Activated naive CD4-positive, alpha-beta T cell treated with anti-CD3 and anti-CD28 coated beads, Interleukin-2, amount 10 ng/mL, durations not matched to agents 7 days and 5 days (primary cell): ENCODE measurements at regions of chr17 and their contacts with region 1.

Region 1: GRCh38 chr17:40355123-40355803 is 9.3 kb downstream of the GJD3 start:
- DNase-seq: peak; percentile 83
- H3K4me3 Mint-ChIP-seq: no peak overlapping the region
- H3K27ac Mint-ChIP-seq: no peak overlapping the region
- H3K4me1 Mint-ChIP-seq: peaks cover 32% of the 10 kb centered on the region
- H3K27me3 Mint-ChIP-seq: peaks cover 5% of the 10 kb centered on the region

Region 2: DNA sequence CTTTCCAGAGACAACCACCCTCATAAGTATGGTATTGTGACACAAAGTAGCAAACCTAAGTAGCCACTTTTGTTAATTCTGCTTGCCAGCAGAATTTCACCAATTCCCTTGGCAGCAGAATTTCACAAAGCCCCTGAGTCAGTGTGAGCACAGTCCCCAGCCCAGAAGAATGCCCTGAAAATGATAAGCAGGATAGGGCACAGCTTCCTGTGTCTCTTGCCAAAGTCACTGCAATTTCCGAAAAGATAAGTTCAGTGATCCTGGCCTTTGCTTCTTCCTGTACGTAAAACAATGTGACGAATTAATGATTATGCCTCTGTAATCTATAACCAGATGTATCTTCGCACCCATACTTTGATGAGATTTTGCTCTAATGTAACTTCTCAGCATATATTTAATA is 152.1 kb before region 1 on chr17:
- CTCF ChIA-PET with region 1: interaction called, 11 read pairs
- DNase-seq: no peak
- H3K4me3 Mint-ChIP-seq: no peak overlapping the region
- H3K27ac Mint-ChIP-seq: no peak overlapping the region
- H3K4me1 Mint-ChIP-seq: peaks cover 6% of the 10 kb centered on the region
- H3K27me3 Mint-ChIP-seq: peaks cover 48% of the 10 kb centered on the region

Region 3: GRCh38 chr17:40293363-40293762 is 61.9 kb before region 1 on chr17:
- CTCF ChIA-PET with region 1: interaction called, 370 read pairs
- DNase-seq: no peak
- H3K4me3 Mint-ChIP-seq: no peak overlapping the region
- H3K27ac Mint-ChIP-seq: peak overlapping the region; percentile 42
- H3K4me1 Mint-ChIP-seq: peaks cover 42% of the 10 kb centered on the region
- H3K27me3 Mint-ChIP-seq: no peaks in the 10 kb centered on the region

Region 4: DNA sequence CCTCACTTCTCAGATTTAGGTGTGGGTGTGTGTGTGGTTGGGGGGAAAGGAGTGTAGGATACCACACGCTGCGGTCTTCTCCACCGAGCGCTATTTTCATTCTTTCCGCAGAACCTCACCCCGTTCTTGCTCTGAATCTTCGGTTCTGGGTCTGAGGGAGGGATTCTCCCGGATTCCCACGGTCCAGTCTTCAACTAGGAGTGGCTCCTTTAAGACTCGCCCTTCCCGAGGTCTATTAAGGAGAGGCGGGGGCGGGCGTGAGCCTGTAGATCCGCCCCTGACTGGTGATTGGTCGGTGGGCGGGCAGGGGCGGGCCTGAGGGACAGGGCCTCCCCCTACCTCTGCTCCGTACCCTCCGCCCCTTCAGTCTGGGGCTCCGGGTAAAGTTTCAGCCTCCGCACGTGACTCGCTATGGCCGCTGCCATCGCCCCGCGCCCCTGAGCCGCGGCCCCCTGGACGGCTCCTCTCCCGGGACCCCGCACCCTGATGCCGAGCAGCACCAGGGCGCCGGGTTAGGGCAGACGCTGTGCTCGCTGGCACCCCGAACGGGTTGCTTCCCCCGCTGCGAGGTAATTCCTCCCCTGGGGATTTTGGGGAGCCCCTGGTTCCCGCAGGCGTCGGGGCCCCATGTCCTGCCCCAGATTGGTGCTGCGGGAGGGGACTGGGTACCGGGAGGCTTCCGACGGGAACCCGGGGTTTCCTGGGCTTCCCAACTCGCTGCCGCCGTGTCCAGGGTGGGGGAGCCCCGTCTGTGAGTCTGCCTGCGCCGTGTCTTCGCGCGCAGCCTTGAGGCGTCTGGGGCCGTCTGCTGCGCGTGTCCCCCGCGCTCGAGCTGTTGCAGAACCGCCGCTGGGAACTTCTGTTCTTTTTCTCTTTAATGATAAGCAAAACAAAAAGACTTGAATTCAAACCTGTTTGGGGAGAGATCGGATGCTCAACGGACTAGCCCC is 37.1 kb before region 1 on chr17:
- CTCF ChIA-PET with region 1: interaction called, 370 read pairs
- DNase-seq: peak; percentile 93
- H3K4me3 Mint-ChIP-seq: peak overlapping the region; percentile 94
- H3K27ac Mint-ChIP-seq: peak overlapping the region; percentile 91
- H3K4me1 Mint-ChIP-seq: peaks cover 68% of the 10 kb centered on the region
- H3K27me3 Mint-ChIP-seq: no peaks in the 10 kb centered on the region

Region 5: GRCh38 chr17:40323391-40324381 is 31.6 kb before region 1 on chr17:
- CTCF ChIA-PET with region 1: interaction called, 48 read pairs
- DNase-seq: peak; percentile 70
- H3K4me3 Mint-ChIP-seq: peak overlapping the region; percentile 94
- H3K27ac Mint-ChIP-seq: peak overlapping the region; percentile 91
- H3K4me1 Mint-ChIP-seq: peaks cover 84% of the 10 kb centered on the region
- H3K27me3 Mint-ChIP-seq: no peaks in the 10 kb centered on the region

Region 6: DNA sequence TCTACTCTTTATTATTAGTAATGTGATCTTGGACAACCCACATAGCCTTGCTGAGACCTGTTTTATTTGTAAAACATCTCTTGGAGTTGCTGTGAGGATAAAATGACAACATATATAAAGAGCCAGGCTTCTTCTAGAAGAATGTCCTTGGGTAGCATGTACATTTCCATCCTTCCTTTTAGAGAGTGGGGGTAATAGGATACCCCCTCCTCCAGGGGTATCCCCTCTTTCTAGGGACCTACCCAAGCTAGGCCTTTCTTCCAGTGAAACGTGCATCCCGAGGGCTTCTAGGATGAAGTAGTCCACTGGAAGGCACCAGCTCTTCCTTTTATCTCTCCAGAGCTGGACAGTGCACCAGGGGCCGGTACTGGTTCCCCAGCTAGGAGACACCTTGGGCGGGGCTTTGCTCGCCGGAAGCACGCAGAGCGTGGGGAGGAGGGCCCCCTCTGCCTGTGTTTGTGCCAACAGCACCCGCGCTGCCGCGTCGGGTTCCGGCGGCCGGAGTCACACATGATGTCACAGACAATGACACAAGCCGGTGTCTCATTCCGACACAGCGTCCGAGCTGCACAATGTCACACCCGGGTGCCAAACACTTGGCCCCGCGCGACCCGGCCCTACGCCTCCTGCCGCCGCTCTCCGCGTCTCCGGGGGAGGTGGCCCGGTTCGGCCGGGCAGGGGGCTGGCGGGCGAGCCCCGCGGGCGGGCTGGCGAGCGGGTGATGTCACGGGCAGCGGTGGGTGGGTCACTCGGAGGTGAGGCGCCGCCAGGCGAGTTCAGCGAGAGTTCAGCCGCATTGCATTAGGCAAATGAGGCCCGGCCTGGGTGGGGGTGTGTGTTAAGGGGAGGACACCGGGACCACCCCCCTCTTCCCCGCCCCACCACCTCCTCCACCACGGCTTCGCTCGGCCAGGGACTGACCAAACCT is 14.1 kb before region 1 on chr17:
- CTCF ChIA-PET with region 1: interaction called, 13 read pairs
- DNase-seq: peak; percentile 91
- H3K4me3 Mint-ChIP-seq: peak overlapping the region; percentile 66
- H3K27ac Mint-ChIP-seq: peak overlapping the region; percentile 88
- H3K4me1 Mint-ChIP-seq: peaks cover 80% of the 10 kb centered on the region
- H3K27me3 Mint-ChIP-seq: no peaks in the 10 kb centered on the region

Region 7: DNA sequence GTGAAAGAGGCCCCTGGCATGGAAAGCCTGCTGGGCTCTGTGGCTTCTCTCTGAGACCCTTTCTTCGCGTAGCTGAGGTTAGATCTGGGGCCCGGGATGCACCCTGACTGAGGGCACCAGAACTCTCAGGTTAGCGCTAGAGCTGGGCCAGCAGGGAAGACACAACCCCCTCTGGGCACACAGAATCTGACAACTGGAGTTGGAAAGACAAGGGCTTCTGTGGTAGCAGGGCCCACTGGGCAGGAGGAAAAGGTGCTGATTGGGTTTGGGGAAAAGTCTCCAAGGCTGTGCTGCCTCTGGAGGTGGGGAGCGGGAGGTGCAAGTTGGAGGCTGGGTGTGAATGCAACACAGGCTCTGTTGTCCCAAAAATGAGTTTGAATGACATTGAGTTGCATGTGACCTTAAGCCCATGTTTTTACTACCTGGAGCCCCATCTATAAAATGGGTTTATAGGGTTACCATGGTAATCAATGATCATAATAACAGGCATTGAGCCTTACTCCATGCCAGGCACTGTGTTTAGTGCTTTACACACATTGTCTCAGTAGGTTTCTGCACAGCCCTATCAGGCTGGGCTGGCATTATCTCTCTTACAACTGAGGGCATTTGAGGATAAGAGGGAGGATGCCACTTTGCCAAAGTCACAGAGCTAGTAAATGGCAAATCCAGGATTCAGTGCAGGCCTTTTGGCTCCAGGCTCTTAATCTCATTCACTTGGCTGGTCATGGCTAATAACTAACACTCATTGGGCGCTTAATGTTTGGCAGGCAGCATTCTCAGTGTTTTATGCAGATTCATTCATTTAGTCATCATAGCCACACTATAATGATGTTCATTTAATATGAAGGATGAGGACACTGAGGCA is 78.5 kb after region 1 on chr17:
- CTCF ChIA-PET with region 1: no interaction called
- DNase-seq: peak; percentile 57
- H3K4me3 Mint-ChIP-seq: no peak overlapping the region
- H3K27ac Mint-ChIP-seq: no peak overlapping the region
- H3K4me1 Mint-ChIP-seq: peaks cover 17% of the 10 kb centered on the region
- H3K27me3 Mint-ChIP-seq: peaks cover 66% of the 10 kb centered on the region

Region 8: DNA sequence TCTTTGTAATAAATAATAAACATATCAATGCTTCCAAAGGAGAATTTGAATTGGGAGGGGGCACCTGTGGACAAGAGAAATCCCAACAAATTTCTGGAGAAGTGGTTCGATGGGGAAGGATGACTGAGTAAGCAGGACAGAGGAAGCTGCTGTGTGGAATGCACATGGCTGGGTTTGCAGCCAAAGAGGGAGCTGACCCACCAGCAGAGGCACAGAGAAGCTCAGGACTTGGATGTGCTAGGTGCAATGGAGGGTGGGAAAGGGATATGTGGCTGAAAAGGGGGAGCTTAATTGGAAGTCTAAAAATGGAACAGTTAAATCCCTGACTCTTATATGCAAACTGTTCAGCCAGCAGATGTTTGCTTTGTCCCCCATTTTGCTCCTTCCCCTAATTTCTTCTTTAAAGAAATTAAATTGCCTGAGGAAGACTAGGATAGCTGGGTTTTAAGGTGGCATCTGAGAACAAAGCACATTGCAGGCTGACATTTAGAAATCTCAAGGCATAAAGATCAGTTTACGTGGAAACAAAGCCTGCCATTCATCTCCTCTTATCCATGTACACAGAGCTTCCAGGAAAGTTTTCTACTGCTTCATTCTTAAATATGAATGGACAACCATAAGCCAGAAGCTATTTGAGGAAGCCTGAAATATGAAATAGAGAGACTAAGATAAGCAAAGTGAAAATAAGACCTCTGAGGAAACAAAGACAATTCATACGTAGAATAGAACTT is 169.1 kb after region 1 on chr17:
- CTCF ChIA-PET with region 1: no interaction called
- DNase-seq: no peak
- H3K4me3 Mint-ChIP-seq: no peak overlapping the region
- H3K27ac Mint-ChIP-seq: no peak overlapping the region
- H3K4me1 Mint-ChIP-seq: peaks cover 87% of the 10 kb centered on the region
- H3K27me3 Mint-ChIP-seq: no peaks in the 10 kb centered on the region